GM12878 (cell line): ENCODE measurements at regions of chr6 and their contacts with region 1.

Region 1: GRCh38 chr6:151675746-151676416 is 131.6 kb upstream of the ESR1 start:
- DNase-seq: peak; percentile 11
- ATAC-seq: peak; percentile 96
- H3K4me3 ChIP-seq: no peak overlapping the region
- H3K27ac ChIP-seq: no peak overlapping the region
- H3K4me1 ChIP-seq: peaks cover 5% of the 10 kb centered on the region; the same call in 1 of the 2 replicates
- H3K27me3 ChIP-seq: no peaks in the 10 kb centered on the region
- CTCF ChIP-seq: peak; percentile 95 to 99 (median 96)
- EP300 ChIP-seq: no peak
- POLR2A ChIP-seq: no peak
- RAD21 ChIP-seq: peak; percentile 90

Region 2: DNA sequence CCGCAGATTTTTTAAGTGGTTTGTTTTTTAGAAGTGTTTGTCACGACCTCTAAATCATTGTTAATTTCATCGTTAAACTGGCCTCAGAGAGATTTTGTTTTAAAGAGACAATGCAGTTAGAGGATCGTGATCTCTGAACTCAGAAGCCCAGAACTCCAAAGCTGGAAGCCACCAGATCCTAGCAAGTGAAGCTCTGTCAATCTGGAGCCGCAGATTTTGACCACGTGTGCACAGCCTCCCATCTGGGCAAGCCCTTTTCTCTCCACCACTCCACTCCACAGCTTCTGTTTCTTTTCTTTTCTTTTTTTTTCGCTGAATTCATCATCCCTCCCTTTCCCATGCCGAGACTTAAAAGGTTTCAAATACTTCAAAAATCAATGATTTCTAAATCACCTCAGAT is 10.6 kb before region 1 on chr6:
- CTCF ChIA-PET with region 1: interaction called, 15 read pairs
- POLR2A ChIA-PET with region 1: interaction called, 3 read pairs
- RAD21 ChIA-PET with region 1: no interaction called
- SMC1A ChIA-PET with region 1: interaction called, 4 read pairs
- in situ Hi-C with region 1: no loop called
- intact Hi-C with region 1: no loop called
- DNase-seq: no peak
- ATAC-seq: no peak
- H3K4me3 ChIP-seq: no peak overlapping the region
- H3K27ac ChIP-seq: no peak overlapping the region
- H3K4me1 ChIP-seq: no peaks in the 10 kb centered on the region
- H3K27me3 ChIP-seq: no peaks in the 10 kb centered on the region; a peak in 3 of 4 replicates
- CTCF ChIP-seq: no peak
- EP300 ChIP-seq: no peak
- POLR2A ChIP-seq: no peak
- RAD21 ChIP-seq: no peak

Region 3: DNA sequence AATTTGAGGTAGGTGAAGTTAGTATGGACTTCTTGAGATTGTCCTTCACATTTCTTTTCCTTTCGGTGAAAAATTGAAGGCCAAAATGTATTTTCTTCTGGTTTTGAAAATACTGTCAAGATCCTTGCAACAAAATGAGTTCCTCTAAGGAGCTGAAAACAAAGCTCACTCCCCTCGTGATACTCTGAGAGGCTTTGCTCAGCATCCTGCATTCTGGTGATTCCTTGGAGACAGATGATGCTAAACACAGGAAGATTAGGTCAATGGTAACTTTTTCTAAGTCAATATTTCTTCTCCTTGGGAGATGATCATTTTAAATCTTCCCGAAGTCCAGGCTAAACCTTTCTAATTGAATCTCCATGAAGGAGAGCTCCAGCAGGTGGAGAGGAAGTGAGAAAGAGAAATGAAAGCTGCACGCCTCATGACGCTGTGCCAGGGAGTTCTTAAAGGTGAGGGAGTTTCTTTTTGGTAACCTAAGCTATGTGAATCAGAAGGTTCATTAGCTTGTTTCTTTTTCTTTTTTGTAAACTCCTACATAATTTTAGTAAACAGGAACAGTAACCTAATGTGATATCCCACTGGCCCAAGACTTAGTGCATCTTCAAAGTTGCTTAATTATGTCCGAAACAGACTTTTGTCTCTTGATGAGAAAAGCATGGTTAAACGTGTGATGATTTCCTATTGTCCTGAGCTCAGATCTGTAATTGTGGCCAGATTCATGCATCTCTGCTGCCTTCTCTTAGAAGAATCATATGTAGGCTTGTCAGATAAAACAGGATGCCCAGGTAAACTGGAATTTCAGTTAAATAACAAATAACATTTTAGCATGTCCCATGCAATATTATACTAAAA is 146.6 kb after region 1 on chr6:
- CTCF ChIA-PET with region 1: interaction called, 4 read pairs
- POLR2A ChIA-PET with region 1: no interaction called
- RAD21 ChIA-PET with region 1: interaction called, 3 read pairs
- SMC1A ChIA-PET with region 1: no interaction called
- in situ Hi-C with region 1: no loop called
- intact Hi-C with region 1: loop called (anchors 1 kb)
- DNase-seq: peak; percentile 32
- ATAC-seq: peak; percentile 96
- H3K4me3 ChIP-seq: no peak overlapping the region
- H3K27ac ChIP-seq: no peak overlapping the region
- H3K4me1 ChIP-seq: peaks cover 4% of the 10 kb centered on the region
- H3K27me3 ChIP-seq: no peaks in the 10 kb centered on the region
- CTCF ChIP-seq: no peak
- EP300 ChIP-seq: peak; percentile 68 to 73; a peak in 2 of 4 replicates
- POLR2A ChIP-seq: no peak
- RAD21 ChIP-seq: no peak